WTC11 (cell line): ENCODE measurements at regions of chr15 and their contacts with region 1.

Region 1: GRCh38 chr15:73866881-73867410 is 6.4 kb upstream of the TBC1D21 start:
- DNase-seq: peak; percentile 67
- ATAC-seq: peak; percentile 93
- H3K4me3 Mint-ChIP-seq: no peak overlapping the region
- H3K27ac Mint-ChIP-seq: no peak overlapping the region
- H3K4me1 Mint-ChIP-seq: peaks cover 37% of the 10 kb centered on the region
- H3K27me3 Mint-ChIP-seq: no peaks in the 10 kb centered on the region
- CTCF ChIP-seq: no peak; the same call in 1 of the 2 replicates

Region 2: DNA sequence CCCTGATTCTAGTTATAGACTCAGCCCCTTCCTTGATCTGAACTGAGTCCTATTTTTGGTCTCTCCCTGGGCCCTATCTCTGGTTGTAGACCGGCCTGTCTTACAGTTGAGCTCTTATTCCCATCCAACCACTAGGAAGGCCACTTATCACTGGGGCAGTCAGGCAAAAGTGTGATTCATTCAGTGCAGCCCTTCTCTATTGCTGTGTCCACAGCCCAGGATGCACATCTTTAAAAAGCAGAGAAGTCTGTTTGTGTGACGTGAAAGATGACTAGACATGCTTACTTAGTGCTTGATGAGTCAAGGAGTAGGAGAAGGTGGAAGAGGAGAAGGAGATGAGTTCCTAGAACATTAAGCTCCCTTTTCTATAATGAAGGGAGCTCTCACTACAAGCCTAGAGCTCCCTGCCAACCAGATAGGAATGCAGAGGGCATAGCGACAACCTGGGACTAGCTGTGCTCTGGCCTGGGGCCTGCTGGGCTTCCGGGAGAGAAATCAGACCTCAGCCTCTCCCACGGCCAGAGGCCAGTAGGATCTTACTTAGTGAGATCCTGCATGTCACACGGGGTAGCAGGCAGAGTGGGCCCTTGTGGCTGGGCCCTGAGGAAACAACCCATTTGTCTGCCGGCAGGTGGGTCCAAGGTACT is 139.5 kb before region 1 on chr15:
- CTCF ChIA-PET with region 1: interaction called, 11 read pairs
- POLR2A ChIA-PET with region 1: no interaction called
- DNase-seq: no peak
- ATAC-seq: no peak
- H3K4me3 Mint-ChIP-seq: no peak overlapping the region
- H3K27ac Mint-ChIP-seq: no peak overlapping the region
- H3K4me1 Mint-ChIP-seq: no peaks in the 10 kb centered on the region
- H3K27me3 Mint-ChIP-seq: no peaks in the 10 kb centered on the region
- CTCF ChIP-seq: no peak

Region 3: GRCh38 chr15:73781038-73781925 is 85.7 kb before region 1 on chr15:
- CTCF ChIA-PET with region 1: interaction called, 34 read pairs
- POLR2A ChIA-PET with region 1: no interaction called
- DNase-seq: no peak
- ATAC-seq: peak; percentile 75
- H3K4me3 Mint-ChIP-seq: no peak overlapping the region
- H3K27ac Mint-ChIP-seq: no peak overlapping the region
- H3K4me1 Mint-ChIP-seq: peaks cover 44% of the 10 kb centered on the region
- H3K27me3 Mint-ChIP-seq: no peaks in the 10 kb centered on the region; the same call in 1 of the 2 replicates
- CTCF ChIP-seq: 0 out of 2 replicates have a peak, but pooled peaks have one; percentile 29

Region 4: DNA sequence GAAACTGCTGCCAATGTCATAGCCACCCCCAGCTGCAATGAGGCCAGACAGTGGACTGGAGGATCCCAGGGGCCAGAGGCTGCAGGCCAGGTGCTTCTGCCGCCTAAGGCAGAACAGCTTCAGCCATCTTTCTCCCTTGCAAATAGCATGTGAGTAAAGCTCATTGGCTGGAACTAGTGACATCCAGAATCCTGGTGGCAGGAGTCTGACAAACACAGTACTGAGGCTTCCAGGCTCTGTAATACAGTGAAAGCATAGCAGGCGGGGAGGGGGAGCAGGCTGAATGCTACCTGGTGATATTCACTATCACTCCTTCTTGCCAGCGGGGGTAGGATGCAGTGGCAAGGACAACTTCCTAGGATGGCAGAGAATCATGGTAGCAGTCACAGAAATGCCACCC is 30.1 kb before region 1 on chr15:
- CTCF ChIA-PET with region 1: interaction called, 23 read pairs
- POLR2A ChIA-PET with region 1: no interaction called
- DNase-seq: no peak
- ATAC-seq: no peak
- H3K4me3 Mint-ChIP-seq: no peak overlapping the region
- H3K27ac Mint-ChIP-seq: no peak overlapping the region
- H3K4me1 Mint-ChIP-seq: peaks cover 6% of the 10 kb centered on the region
- H3K27me3 Mint-ChIP-seq: peaks cover 7% of the 10 kb centered on the region; the same call in 1 of the 2 replicates
- CTCF ChIP-seq: no peak

Region 5: GRCh38 chr15:73897441-73898261 is 30.7 kb after region 1 on chr15:
- CTCF ChIA-PET with region 1: interaction called, 35 read pairs
- POLR2A ChIA-PET with region 1: no interaction called
- DNase-seq: peak; percentile 78
- ATAC-seq: peak; percentile 92
- H3K4me3 Mint-ChIP-seq: no peak overlapping the region
- H3K27ac Mint-ChIP-seq: no peak overlapping the region
- H3K4me1 Mint-ChIP-seq: peaks cover 14% of the 10 kb centered on the region
- H3K27me3 Mint-ChIP-seq: no peaks in the 10 kb centered on the region
- CTCF ChIP-seq: peak; percentile 99

Region 6: GRCh38 chr15:73936181-73936580 is 69.2 kb after region 1 on chr15:
- CTCF ChIA-PET with region 1: interaction called, 13 read pairs
- POLR2A ChIA-PET with region 1: no interaction called
- DNase-seq: no peak
- ATAC-seq: peak; percentile 33; the same call in 1 of the 2 replicates
- H3K4me3 Mint-ChIP-seq: no peak overlapping the region
- H3K27ac Mint-ChIP-seq: no peak overlapping the region
- H3K4me1 Mint-ChIP-seq: peaks cover 14% of the 10 kb centered on the region
- H3K27me3 Mint-ChIP-seq: no peaks in the 10 kb centered on the region
- CTCF ChIP-seq: no peak